ENCODE measurements at regions of chr11 and their contacts with region 1.

Region 1: DNA sequence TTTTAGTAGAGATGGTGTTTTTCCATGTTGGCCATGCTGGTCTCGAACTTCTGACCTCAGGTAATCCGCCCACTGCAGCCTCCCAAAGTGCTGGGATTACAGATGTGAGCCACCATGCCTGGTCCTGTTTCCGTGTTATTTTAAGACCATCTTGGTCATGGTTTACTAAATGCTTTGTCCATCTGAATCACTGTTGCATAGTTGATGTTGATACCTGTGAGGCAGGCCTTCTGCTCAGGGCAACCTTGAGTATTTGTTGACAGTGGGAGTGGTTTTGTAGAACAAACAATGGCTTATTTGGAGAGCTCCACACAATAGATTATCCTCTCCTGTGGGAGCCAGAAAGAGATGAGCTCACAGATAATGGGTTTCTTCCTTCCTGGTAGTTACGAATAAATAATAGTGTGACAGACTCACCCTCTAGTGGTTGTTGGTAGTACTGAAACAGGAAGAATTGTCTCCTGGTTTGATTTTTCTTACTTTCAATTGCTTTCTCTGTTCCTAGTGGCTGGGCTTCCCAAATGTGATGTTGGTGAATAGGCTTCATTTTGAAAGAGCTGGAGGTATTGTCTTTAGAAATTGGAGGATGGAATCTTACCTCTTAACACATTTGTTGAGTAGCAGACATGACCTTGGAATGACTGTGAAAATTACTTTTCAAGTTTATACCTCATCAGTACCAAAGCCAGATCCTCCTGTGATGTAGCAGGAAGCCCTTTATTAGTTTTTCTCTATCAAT is 39.0 kb downstream of the CTNND1 start:
- DNase-seq: peak; percentile 40
- ATAC-seq: peak; percentile 90
- H3K4me3 Mint-ChIP-seq: peak overlapping the region; percentile 20
- H3K27ac Mint-ChIP-seq: peak overlapping the region; percentile 70
- H3K4me1 Mint-ChIP-seq: peaks cover 41% of the 10 kb centered on the region
- H3K27me3 Mint-ChIP-seq: no peaks in the 10 kb centered on the region

Region 2: GRCh38 chr11:57493507-57494503 is 306.8 kb before region 1 on chr11:
- CTCF ChIA-PET with region 1: interaction called, 15 read pairs
- POLR2A ChIA-PET with region 1: no interaction called
- DNase-seq: peak; percentile 82
- ATAC-seq: peak; percentile 79
- H3K4me3 Mint-ChIP-seq: no peak overlapping the region
- H3K27ac Mint-ChIP-seq: peak overlapping the region; percentile 86
- H3K4me1 Mint-ChIP-seq: peaks cover 12% of the 10 kb centered on the region
- H3K27me3 Mint-ChIP-seq: no peaks in the 10 kb centered on the region

Region 3: GRCh38 chr11:57667736-57668435 is 132.7 kb before region 1 on chr11 and contains the start of gene ZDHHC5:
- CTCF ChIA-PET with region 1: interaction called, 55 read pairs
- POLR2A ChIA-PET with region 1: interaction called, 4 read pairs
- DNase-seq: peak; percentile 100
- ATAC-seq: peak; percentile 92
- H3K4me3 Mint-ChIP-seq: peak within 1 kb of the TSS; percentile 96
- H3K27ac Mint-ChIP-seq: peak within 1 kb of the TSS; percentile 99
- H3K4me1 Mint-ChIP-seq: peaks cover 45% of the 10 kb centered on the region
- H3K27me3 Mint-ChIP-seq: no peaks in the 10 kb centered on the region
- total RNA-seq, gene ZDHHC5: 77.8 to 82.4 TPM

Region 4: GRCh38 chr11:57712256-57713150 is 88.1 kb before region 1 on chr11 and contains the start of gene TMX2:
- CTCF ChIA-PET with region 1: interaction called, 57 read pairs
- POLR2A ChIA-PET with region 1: interaction called, 3 read pairs
- DNase-seq: peak; percentile 95
- ATAC-seq: peak; percentile 96
- H3K4me3 Mint-ChIP-seq: peak within 1 kb of the TSS; percentile 100
- H3K27ac Mint-ChIP-seq: peak within 1 kb of the TSS; percentile 100
- H3K4me1 Mint-ChIP-seq: peaks cover 41% of the 10 kb centered on the region
- H3K27me3 Mint-ChIP-seq: no peaks in the 10 kb centered on the region
- total RNA-seq, gene TMX2: 65.0 to 68.7 TPM

Region 5: GRCh38 chr11:57751676-57752253 is 48.8 kb before region 1 on chr11 and contains the start of gene BTBD18:
- CTCF ChIA-PET with region 1: interaction called, 113 read pairs
- POLR2A ChIA-PET with region 1: no interaction called
- DNase-seq: no peak
- ATAC-seq: peak; percentile 41
- H3K4me3 Mint-ChIP-seq: no peak within 1 kb of the TSS
- H3K27ac Mint-ChIP-seq: no peak within 1 kb of the TSS
- H3K4me1 Mint-ChIP-seq: peaks cover 21% of the 10 kb centered on the region
- H3K27me3 Mint-ChIP-seq: no peaks in the 10 kb centered on the region
- total RNA-seq, gene BTBD18: not detected

Region 6: GRCh38 chr11:57812634-57813033 is 12.0 kb after region 1 on chr11:
- CTCF ChIA-PET with region 1: interaction called, 23 read pairs
- POLR2A ChIA-PET with region 1: no interaction called
- DNase-seq: no peak
- ATAC-seq: no peak
- H3K4me3 Mint-ChIP-seq: no peak overlapping the region
- H3K27ac Mint-ChIP-seq: no peak overlapping the region
- H3K4me1 Mint-ChIP-seq: no peaks in the 10 kb centered on the region
- H3K27me3 Mint-ChIP-seq: no peaks in the 10 kb centered on the region

Measured in activated CD8-positive, alpha-beta T cell treated with anti-CD3 and anti-CD28 coated beads, Interleukin-2, amount 10 ng/mL, durations not matched to agents 7 days and 5 days (primary cell).